Right ventricle myocardium inferior (tissue), 1 donor: ENCODE measurements at regions of chr6 and their contacts with region 1.

Region 1: GRCh38 chr6:101747716-101748115 is 354.2 kb downstream of the GRIK2 start:
- DNase-seq: no peak
- ATAC-seq: peak; percentile 67

Region 2: GRCh38 chr6:101393251-101393828 is 354.4 kb before region 1 on chr6 and contains the start of gene GRIK2:
- intact Hi-C with region 1: loop called (anchors 10 kb)
- DNase-seq: peak; percentile 49
- ATAC-seq: peak; percentile 64
- total RNA-seq, gene GRIK2: 2.7 TPM

Region 3: DNA sequence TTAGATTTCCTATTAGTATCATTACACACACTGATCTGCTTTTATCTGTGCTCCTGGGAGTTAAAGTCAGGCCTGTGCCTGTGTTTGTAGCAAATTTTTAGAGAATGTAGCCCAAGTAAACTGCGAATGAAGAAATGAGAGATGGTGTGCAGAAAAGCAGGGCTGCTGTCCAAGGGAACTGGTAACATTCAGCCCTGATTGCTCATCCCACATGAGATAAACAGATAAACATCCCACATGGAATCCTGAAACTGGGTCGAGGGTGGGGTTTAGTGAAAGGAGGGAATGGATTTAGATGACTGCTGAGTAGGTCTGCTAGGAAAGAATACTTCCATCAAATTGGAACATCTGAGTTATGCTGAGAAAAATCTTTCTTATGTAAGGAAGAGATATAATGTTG is 285.1 kb before region 1 on chr6:
- intact Hi-C with region 1: loop called (anchors 10 kb)
- DNase-seq: no peak
- ATAC-seq: no peak

Region 4: DNA sequence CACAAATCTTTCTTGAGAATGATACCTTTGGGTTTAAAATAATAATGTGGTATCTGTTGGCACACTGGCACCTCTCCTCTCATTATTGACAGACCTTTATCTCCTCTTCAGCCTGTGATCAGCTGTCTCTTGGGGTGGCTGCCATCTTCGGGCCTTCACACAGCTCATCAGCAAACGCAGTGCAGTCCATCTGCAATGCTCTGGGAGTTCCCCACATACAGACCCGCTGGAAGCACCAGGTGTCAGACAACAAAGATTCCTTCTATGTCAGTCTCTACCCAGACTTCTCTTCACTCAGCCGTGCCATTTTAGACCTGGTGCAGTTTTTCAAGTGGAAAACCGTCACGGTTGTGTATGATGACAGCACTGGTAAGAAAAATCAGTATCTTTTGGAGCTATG is 121.4 kb before region 1 on chr6:
- intact Hi-C with region 1: no loop called
- DNase-seq: no peak
- ATAC-seq: no peak

Region 5: DNA sequence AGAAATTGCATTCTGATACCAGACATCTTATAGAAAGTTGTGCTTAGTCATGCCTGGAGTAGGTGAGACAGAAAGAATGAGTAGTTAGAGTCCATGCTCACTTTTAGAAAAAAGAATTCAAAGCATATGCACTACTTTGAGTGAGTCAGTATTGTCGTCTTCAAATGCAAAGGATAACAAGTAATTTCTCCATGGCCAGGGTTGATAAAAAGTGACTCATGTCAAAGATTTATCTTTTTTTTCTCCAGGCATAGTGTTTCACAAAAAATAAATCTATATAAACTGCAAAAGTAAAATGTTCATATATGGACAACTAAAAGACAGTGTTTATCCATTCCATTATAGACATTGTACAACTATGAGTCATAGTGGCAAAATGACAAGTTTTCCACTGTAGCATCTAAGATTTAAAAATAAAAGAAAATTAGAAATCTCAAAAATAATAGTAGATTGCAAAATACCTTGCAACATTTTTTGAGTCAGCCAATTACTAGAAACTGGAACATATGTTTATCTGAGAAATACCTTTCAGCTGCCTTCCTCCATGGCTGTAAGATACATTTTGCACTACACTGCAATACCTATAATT is 24.6 kb before region 1 on chr6:
- intact Hi-C with region 1: no loop called
- DNase-seq: no peak
- ATAC-seq: no peak